KBM-7 (cell line): ENCODE measurements at regions of chr20 and their contacts with region 1.

Region 1: GRCh38 chr20:51595058-51595532 is 52.6 kb upstream of the NFATC2 start:
- DNase-seq: peak; percentile 91

Region 2: GRCh38 chr20:51385646-51386530 is 209.2 kb before region 1 on chr20:
- in situ Hi-C with region 1: loop called (anchors 25 kb)
- DNase-seq: peak; percentile 45